Activated CD4-positive, alpha-beta memory T cell treated with anti-CD3 and anti-CD28 coated beads for 36 hours (primary cell): ENCODE measurements at regions of chr6 and their contacts with region 1.

Region 1: DNA sequence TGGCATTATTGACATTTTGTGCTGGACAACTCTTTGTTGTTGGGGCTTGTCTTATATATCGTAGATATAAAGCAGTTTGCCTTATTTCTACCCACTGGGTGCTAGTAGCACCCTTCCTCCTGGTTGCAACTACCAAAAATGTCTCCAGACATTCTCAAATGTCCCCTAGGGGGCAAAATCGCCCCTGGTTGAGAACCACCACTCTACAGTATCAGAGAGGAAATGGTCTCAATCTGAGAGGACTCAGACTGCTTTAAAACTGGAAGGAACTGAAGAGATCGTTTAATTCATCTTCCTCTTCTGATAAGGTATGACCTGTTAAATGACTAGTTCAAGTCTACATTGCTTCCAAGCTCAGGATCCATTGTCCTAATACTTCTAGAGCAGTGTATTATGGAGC is 14.9 kb downstream of the SH3BGRL2 start:
- DNase-seq: peak; percentile 20
- H3K4me3 Mint-ChIP-seq: no peak overlapping the region
- H3K27ac Mint-ChIP-seq: no peak overlapping the region
- H3K4me1 Mint-ChIP-seq: no peaks in the 10 kb centered on the region
- H3K27me3 Mint-ChIP-seq: peaks cover 8% of the 10 kb centered on the region

Region 2: DNA sequence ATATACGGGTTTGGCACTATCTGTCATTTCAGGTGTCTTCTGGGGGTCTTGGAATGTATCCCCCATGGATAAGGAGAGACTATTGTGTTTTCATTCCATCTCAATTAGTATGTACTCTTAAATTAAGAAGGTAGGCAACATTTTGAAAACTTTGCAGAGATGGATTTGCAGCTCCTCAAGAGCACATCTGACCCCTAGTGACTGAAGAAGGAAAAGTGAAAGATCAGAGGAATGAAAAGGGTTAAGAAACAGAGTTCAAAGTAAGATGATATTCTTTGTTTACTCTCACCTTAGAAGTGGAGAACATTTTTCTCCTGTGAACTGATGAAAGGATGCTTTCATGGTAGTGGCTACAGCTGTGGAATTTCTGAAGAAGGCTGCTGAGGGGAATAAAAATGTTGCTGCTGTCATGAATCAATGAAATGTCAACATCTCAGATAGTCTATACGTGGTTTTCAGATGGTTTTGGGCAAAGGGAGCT is 26.7 kb after region 1 on chr6:
- CTCF ChIA-PET with region 1: no interaction called
- POLR2A ChIA-PET with region 1: interaction called, 3 read pairs
- intact Hi-C with region 1: loop called (anchors 1 kb)
- DNase-seq: no peak
- H3K4me3 Mint-ChIP-seq: no peak overlapping the region
- H3K27ac Mint-ChIP-seq: no peak overlapping the region
- H3K4me1 Mint-ChIP-seq: peaks cover 23% of the 10 kb centered on the region
- H3K27me3 Mint-ChIP-seq: no peaks in the 10 kb centered on the region